ENCODE measurements at regions of chr7 and their contacts with region 1.

Region 1: DNA sequence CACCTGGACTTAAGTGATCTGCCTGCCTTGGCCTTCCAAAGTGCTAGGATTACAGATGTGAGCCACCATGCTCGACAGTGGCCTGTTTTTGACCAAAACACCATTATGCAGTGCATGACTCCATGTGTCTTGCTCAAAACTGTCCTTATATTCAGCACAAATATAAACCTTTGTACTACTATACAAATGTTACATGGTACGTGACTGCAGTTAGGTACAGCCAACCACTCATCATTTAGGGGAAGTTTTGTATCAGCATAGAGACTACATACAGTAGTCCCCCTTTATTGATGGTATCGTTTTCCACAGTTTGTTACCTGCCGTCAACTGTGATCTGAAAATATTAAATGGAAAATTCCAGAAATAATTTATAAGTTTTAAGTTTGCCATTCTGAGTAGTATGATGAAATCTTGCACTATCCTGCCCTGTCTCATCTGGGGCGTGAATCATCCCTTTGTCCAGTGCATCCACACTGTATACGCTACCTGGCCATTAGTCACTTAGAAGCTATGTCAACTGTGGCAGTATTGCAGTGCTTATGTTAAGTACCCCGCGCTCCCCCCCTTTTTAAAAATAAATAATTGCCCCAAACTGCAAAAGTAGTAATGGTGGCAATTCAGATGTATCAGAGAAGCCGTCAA is 23.3 kb upstream of the ZNF282 start:
- DNase-seq: no peak
- H3K4me3 ChIP-seq: no peak overlapping the region
- H3K27ac ChIP-seq: no peak overlapping the region
- H3K4me1 ChIP-seq: no peaks in the 10 kb centered on the region
- CTCF ChIP-seq: no peak

Region 2: GRCh38 chr7:149229526-149229925 is 57.5 kb after region 1 on chr7:
- CTCF ChIA-PET with region 1: no interaction called
- POLR2A ChIA-PET with region 1: no interaction called
- intact Hi-C with region 1: no loop called
- DNase-seq: no peak
- H3K4me3 ChIP-seq: no peak overlapping the region
- H3K27ac ChIP-seq: no peak overlapping the region
- H3K4me1 ChIP-seq: no peaks in the 10 kb centered on the region
- CTCF ChIP-seq: no peak

Region 3: DNA sequence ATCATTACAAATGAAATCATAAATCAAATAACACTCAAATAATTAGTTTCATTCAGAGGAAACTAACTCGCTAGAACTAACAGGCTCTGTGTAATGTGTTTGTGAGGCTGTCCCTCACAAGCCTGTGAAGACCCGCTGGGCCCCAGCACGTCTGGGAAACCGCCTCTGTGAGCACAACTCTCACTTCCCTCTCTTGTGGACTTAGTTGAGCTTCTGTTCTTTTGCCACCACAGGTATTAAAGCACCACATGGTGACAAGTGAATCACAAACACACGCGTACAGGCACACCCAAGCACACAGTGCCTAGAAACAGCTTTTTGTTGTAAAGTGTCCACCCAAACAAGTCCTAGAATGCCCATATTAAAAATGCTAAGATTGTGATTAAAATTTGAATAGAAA is 237.9 kb after region 1 on chr7:
- CTCF ChIA-PET with region 1: no interaction called
- POLR2A ChIA-PET with region 1: interaction called, 11 read pairs
- intact Hi-C with region 1: no loop called
- DNase-seq: peak; percentile 40
- H3K4me3 ChIP-seq: no peak overlapping the region
- H3K27ac ChIP-seq: no peak overlapping the region
- H3K4me1 ChIP-seq: no peaks in the 10 kb centered on the region
- CTCF ChIP-seq: no peak

Measured in OCI-LY7 (cell line).